Motor neuron (in vitro differentiated cells): ENCODE measurements at regions of chr10 and their contacts with region 1.

Region 1: DNA sequence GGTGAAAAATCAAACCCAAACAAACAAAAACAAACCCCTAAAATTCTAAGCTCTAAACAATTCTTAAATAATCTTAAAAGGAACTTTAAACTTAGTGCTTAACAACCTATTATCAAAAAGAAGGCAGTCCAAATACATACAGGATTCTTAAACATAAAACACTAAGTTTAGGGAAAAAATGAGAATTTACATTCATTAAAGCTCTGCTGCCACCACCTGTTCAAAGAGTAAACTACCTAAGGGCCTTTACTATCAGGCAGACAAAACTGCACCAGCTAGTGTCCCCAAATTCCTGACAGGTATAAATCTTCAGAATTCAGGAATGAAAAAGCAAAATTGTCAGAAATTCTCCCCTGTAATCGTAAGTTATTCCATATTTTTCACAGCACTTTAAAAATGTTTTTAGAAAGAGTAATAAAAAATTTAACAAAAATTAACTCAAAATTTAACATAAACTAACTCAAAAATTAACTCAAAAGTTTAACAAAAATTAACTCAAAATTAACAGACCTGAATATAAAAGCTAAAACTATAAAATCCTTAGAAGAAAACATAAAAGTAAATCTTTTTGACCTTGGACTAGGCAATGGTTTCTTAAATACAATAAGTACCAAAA is 55.1 kb downstream of the PDZD8 start:
- ATAC-seq: peak in 1 of 8 experiments; percentile 21
- H3K4me3 ChIP-seq: no peak overlapping the region
- H3K27ac ChIP-seq: no peak overlapping the region
- H3K4me1 ChIP-seq: no peaks in the 10 kb centered on the region

Region 2: GRCh38 chr10:117216611-117217195 is 103.5 kb before region 1 on chr10:
- in situ Hi-C with region 1: loop called in 4 of 9 experiments (anchors 10 to 25 kb)
- ATAC-seq: peak; percentile 72 to 89 (median 84)
- H3K4me3 ChIP-seq: peak overlapping the region; percentile 28 to 45 (median 33)
- H3K27ac ChIP-seq: no peak overlapping the region
- H3K4me1 ChIP-seq: peaks cover 4 to 5% of the 10 kb centered on the region in 2 donors